AG04449 (cell line): ENCODE measurements at regions of chr3 and their contacts with region 1.

Region 1: GRCh38 chr3:14548321-14548729 is 8.2 kb upstream of the GRIP2 start:
- DNase-seq: no peak
- H3K4me3 ChIP-seq: no peak overlapping the region
- CTCF ChIP-seq: peak; percentile 86

Region 2: DNA sequence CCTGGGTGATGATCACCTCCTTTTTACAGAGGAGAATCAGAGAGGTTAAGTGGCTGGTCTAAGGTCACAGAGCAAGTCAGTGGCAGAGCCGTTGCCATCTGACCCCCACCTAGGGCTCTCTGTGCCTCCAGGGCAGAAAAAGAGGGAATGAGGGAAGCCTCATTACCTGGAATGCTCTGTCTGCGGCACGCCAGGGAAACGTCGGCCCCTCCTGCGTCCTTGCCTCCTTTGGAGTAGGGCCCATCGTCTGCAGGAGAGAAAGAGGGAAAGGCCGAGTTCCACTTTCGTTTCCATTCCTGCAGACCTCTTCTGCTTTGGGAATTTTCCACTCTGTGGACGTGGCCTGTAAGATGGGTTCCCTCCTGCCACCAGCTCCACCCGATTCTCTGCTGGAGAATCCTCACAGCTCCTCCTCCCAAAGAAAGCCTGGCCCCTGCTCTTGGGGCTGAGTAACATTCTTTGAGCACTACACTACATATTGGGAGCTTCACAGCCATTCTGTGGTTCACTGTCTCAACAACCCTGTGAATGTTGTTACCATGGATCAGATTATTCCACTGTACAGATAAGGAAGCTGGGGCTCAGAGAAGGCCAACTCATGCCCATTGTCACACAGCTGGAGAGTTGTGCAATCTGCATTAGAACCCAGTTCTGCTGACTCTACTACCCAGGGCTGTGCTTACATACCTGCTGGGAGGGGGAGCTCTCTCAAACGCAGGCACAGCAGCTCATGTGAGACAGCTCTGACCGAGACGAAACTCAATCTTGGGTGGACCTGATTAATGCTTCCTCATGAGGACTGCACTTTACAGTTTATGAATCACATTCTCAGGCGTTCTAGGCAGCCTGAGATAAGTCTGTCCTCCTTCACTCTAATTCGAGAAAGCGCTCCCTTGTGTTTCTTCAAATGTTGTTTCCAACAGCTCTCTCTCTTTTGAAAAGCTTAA is 22.4 kb before region 1 on chr3:
- CTCF ChIA-PET with region 1: interaction called, 13 read pairs
- POLR2A ChIA-PET with region 1: no interaction called
- DNase-seq: peak; percentile 10
- H3K4me3 ChIP-seq: no peak overlapping the region
- CTCF ChIP-seq: no peak

Region 3: GRCh38 chr3:14537590-14538447 is 10.5 kb before region 1 on chr3:
- CTCF ChIA-PET with region 1: interaction called, 31 read pairs
- POLR2A ChIA-PET with region 1: no interaction called
- DNase-seq: no peak
- H3K4me3 ChIP-seq: no peak overlapping the region
- CTCF ChIP-seq: no peak

Region 4: DNA sequence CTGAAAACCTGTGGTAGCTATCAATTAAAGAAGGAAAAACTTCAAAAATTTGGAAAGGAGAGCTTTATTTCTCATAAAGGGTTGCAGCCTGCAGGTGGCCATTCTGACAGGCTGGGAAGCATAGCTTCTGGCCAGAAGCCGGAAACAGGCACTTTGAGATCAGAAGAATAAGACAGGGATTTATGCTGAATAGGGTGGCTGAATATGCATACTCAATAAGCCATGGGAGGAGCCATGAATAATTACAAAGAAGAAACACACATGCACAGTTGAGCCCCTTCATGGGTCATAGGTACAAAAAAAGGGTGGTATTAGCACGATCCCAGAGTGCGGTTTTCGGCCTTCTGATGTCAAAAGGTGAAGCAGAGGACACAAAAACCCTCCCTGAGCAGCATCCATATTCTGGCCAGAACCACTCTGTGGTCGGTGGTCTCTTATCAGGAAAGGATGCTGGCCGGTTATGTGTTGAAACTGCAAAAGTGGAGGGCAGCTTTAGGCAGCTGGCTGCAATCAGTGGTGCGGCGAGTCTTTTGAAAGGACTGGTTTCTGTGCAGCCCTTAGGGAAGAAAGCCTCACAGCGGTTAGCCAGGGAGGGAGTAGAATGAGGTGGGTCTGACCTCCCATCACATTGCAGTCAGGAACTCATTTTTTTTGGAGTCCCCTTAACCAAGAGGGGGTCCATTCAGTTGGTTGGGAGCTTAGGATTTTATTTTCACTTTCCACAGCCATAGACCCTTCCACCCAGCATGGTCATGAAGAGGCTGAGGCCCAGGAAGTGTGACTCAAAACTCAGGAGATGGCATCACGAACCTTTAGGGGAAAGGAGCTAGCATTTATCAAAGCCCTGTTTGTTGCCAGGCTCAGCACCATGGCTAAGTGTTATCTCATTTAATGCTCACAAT is 68.5 kb after region 1 on chr3:
- CTCF ChIA-PET with region 1: no interaction called
- POLR2A ChIA-PET with region 1: no interaction called
- DNase-seq: no peak
- H3K4me3 ChIP-seq: no peak overlapping the region
- CTCF ChIP-seq: no peak